Esophagus muscularis mucosa (tissue), 4 donors: ENCODE measurements at regions of chr4 and their contacts with region 1.

Region 1: DNA sequence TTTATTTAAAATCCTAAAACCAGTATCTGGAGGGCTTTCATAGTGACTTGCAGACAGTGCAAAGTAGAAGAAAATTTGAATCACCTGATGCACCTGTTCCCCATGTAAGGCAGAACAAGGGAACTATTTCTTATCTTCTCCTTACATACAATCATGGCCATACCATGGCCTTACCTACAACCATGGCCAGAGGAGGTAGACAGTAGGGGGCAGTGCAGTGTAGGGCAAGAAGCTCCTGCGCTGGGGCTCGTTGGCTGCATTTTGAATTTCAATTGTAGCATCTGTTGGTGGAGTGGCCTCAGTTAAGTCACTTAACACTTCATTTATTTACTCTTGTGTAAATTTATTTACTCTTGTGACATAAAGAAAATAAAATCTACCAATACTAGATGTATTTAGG is 33.0 kb downstream of the GALNTL6 start:
- DNase-seq: no peak
- H3K4me3 ChIP-seq: no peak overlapping the region
- H3K27ac ChIP-seq: no peak overlapping the region
- H3K4me1 ChIP-seq: no peaks in the 10 kb centered on the region
- H3K27me3 ChIP-seq: no peaks in the 10 kb centered on the region
- CTCF ChIP-seq: peak in 2 of 3 experiments; percentile 20 to 30
- EP300 ChIP-seq: no peak
- POLR2A ChIP-seq: no peak

Region 2: GRCh38 chr4:172830295-172830764 is 984.1 kb after region 1 on chr4:
- intact Hi-C with region 1: loop called (anchors 10 kb)
- DNase-seq: no peak
- H3K4me3 ChIP-seq: no peak overlapping the region
- H3K27ac ChIP-seq: no peak overlapping the region
- H3K4me1 ChIP-seq: peaks cover 0 to 10% (median 3%) of the 10 kb centered on the region in 4 donors
- H3K27me3 ChIP-seq: no peaks in the 10 kb centered on the region
- CTCF ChIP-seq: peak; percentile 40 to 59 (median 48)
- EP300 ChIP-seq: no peak
- POLR2A ChIP-seq: no peak